Sigmoid colon (tissue), 7 donors: ENCODE measurements at regions of chr12 and their contacts with region 1.

Region 1: GRCh38 chr12:25958428-25959070 is at the start of gene RASSF8:
- DNase-seq: peak; percentile 88
- H3K4me3 ChIP-seq: peak within 1 kb of the TSS; percentile 71 to 93 (median 88)
- H3K27ac ChIP-seq: peak within 1 kb of the TSS; percentile 93 to 96 (median 94)
- H3K4me1 ChIP-seq: peaks cover 0 to 42% (median 40%) of the 10 kb centered on the region in 4 donors
- H3K27me3 ChIP-seq: no peaks in the 10 kb centered on the region
- CTCF ChIP-seq: no peak
- EP300 ChIP-seq: no peak
- POLR2A ChIP-seq: no peak
- total RNA-seq, gene RASSF8: 74.0 to 109 (median 89.4) TPM

Region 2: DNA sequence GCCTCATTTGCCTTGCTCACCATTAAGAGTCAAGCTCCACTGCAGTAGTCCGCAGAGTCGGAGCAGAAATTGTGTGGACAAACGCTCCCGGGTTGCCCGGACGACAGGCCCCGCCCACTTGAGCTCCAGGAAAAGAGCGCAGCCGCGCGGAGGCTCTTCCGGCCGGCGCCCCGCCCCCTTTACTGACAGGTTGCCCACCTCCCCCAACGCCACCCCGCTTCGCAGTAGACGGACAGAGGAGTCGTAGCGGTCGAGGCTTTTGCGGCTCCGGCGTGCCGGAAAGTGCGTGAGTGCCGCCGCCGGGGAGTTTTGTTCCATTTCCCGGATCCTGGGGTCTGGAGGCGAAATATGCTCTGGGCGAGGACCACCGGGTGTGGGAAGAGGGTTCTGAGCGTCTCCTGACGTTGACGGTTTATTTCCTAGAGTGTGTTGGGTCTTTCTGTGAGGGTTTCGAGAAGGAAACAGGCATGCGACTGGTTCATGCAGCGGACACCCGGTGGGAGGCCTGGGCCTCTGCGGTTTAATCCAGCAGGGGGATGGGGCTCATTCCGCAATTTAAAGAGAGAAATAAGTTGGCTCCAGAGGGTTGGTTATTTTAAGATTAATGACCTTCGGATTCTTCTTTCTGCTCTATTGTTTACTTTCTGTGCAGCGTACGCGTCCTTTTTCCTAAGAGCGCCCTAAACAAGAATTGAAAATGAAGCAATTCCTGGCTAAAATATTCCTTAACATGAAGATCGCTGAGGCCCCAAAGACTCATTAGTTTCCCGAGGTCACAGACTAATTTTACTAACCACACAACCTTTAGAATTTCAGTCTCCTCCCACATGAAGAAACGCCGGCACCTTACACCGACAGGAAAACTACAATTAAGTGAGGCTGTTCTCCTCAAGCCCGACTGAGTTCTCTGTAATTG is 763.2 kb before region 1 on chr12 and contains the starts of genes DNAI7 and ETFRF1:
- intact Hi-C with region 1: loop called (anchors 5 kb)
- DNase-seq: peak; percentile 99
- H3K4me3 ChIP-seq: peak within 1 kb of the TSS; percentile 54 to 78 (median 64)
- H3K27ac ChIP-seq: peak within 1 kb of the TSS; percentile 93 to 96 (median 94)
- H3K4me1 ChIP-seq: peaks cover 0 to 22% (median 18%) of the 10 kb centered on the region in 4 donors
- H3K27me3 ChIP-seq: no peaks in the 10 kb centered on the region
- CTCF ChIP-seq: peak in 2 of 4 experiments; percentile 24 to 28
- EP300 ChIP-seq: peak in 1 of 4 donors; percentile 38
- POLR2A ChIP-seq: peak; percentile 75 to 85
- total RNA-seq, gene DNAI7: 0.36 to 1.2 (median 1.1) TPM in 3 of 4 donors, not detected in the other
- total RNA-seq, gene ETFRF1: 38.0 to 63.5 (median 49.4) TPM

Region 3: GRCh38 chr12:25436203-25437030 is 522.1 kb before region 1 on chr12:
- intact Hi-C with region 1: loop called (anchors 1 kb)
- DNase-seq: no peak
- H3K4me3 ChIP-seq: peak overlapping the region; percentile 7 to 34 (median 24)
- H3K27ac ChIP-seq: peak overlapping the region in 1 of 4 donors; percentile 48
- H3K4me1 ChIP-seq: peaks cover 0 to 33% (median 25%) of the 10 kb centered on the region in 4 donors
- H3K27me3 ChIP-seq: no peaks in the 10 kb centered on the region
- CTCF ChIP-seq: peak; percentile 64 to 77 (median 70)
- EP300 ChIP-seq: no peak
- POLR2A ChIP-seq: no peak

Region 4: GRCh38 chr12:25829192-25829591 is 129.4 kb before region 1 on chr12:
- intact Hi-C with region 1: loop called (anchors 5 kb)
- DNase-seq: peak; percentile 84
- H3K4me3 ChIP-seq: no peak overlapping the region
- H3K27ac ChIP-seq: peak overlapping the region; percentile 27 to 77 (median 64)
- H3K4me1 ChIP-seq: peaks cover 0 to 45% (median 39%) of the 10 kb centered on the region in 4 donors
- H3K27me3 ChIP-seq: no peaks in the 10 kb centered on the region
- CTCF ChIP-seq: no peak
- EP300 ChIP-seq: peak in 2 of 4 donors; percentile 56 to 88
- POLR2A ChIP-seq: no peak

Region 5: GRCh38 chr12:26017484-26018206 is 59.1 kb after region 1 on chr12:
- intact Hi-C with region 1: loop called (anchors 2 kb)
- DNase-seq: peak; percentile 64
- H3K4me3 ChIP-seq: no peak overlapping the region
- H3K27ac ChIP-seq: peak overlapping the region in 3 of 4 donors; percentile 23 to 88 (median 80)
- H3K4me1 ChIP-seq: peaks cover 0 to 58% (median 34%) of the 10 kb centered on the region in 4 donors
- H3K27me3 ChIP-seq: no peaks in the 10 kb centered on the region
- CTCF ChIP-seq: peak; percentile 10 to 55 (median 35)
- EP300 ChIP-seq: no peak
- POLR2A ChIP-seq: no peak

Region 6: GRCh38 chr12:26113853-26114719 is 155.5 kb after region 1 on chr12:
- intact Hi-C with region 1: loop called (anchors 5 kb)
- DNase-seq: peak; percentile 97
- H3K4me3 ChIP-seq: peak overlapping the region; percentile 34 to 57 (median 55)
- H3K27ac ChIP-seq: peak overlapping the region; percentile 91 to 95 (median 92)
- H3K4me1 ChIP-seq: peaks cover 0 to 21% (median 18%) of the 10 kb centered on the region in 4 donors
- H3K27me3 ChIP-seq: no peaks in the 10 kb centered on the region
- CTCF ChIP-seq: peak in 3 of 4 experiments; percentile 22 to 43 (median 37)
- EP300 ChIP-seq: peak in 3 of 4 donors; percentile 30 to 53 (median 39)
- POLR2A ChIP-seq: peak; percentile 61 to 63